Posterior cingulate gyrus (tissue), 11 donors: ENCODE measurements at regions of chr20 and their contacts with region 1.

Region 1: GRCh38 chr20:54097236-54097529 is 26.8 kb upstream of the BCAS1 start:
- DNase-seq: no peak

Region 2: DNA sequence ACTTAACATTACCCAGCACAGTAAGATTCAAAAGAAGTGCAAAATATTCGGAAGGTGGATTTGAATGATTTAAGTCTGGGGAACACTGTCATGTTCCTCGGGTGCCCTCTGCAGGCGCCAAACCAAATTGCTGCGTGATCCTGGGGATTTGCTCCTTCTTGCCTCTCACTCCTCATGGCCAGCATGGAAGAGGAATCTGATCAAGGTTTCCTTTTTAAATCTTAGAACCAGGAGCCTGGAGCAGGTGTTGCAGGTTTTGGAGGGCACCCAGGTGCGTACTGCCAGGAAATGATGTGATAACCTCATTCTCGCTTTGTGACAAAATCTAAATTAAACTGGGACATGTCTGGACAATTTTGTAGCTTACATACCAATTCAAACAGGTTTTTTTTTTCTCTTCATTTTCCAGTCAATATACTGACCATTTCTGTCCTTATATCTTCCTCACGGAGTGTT is 102.6 kb after region 1 on chr20:
- intact Hi-C with region 1: loop called (anchors 1 kb)
- DNase-seq: peak; percentile 52 to 96 (median 82)

Region 3: DNA sequence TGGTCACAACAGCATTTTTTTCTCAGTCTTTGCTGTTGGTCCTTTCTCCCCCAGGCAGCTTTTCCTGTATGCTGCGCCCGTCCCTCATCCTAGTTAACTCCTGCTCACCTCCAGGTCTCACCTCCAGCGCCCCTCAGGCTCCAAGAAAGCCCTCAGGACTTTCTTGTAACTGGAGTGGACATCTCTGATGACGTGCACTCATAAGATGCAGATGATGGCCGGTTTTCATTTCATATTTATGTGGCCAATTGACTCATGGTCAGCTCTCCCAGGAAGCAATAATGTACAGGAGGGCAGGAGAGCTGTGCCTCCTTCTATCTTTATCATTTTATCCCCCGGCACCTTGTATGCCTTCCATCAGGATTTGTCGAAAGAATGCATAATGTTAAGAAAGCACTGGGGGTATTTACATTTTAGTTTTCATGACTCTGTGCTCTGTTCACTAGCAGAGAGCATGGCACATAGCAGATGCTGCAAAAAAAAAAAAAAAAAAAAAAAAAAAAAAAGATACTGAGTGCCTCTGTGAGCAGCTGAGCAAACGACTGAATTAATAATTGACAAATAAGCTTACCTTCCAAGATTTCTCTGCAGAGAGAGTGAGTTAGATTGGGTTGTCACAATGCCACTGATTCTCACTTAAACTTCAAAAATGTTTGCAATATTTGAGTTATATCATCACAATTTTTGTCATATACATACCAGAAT is 548.4 kb after region 1 on chr20:
- intact Hi-C with region 1: loop called (anchors 2 kb)
- DNase-seq: no peak